Activated T-helper 1 cell treated with anti-CD3 and anti-CD28 coated beads, Interleukin-12 subunit alpha, Interleukin-12 subunit beta, Interleukin-2, Interleukin-4 antibody, amounts not matched to agents 30 ng/mL and 10 ng/mL and 1 ng/mL, durations not matched to agents 14 hours and 24 hours and 36 hours (primary cell): ENCODE measurements at regions of chr1 and their contacts with region 1.

Region 1: GRCh38 chr1:167599957-167600581 is 30.0 kb upstream of the RCSD1 start:
- DNase-seq: peak; percentile 38
- H3K4me3 Mint-ChIP-seq: peak overlapping the region; percentile 73
- H3K27ac Mint-ChIP-seq: peak overlapping the region; percentile 81
- H3K4me1 Mint-ChIP-seq: peaks cover 46% of the 10 kb centered on the region
- H3K27me3 Mint-ChIP-seq: peaks cover 2% of the 10 kb centered on the region

Region 2: DNA sequence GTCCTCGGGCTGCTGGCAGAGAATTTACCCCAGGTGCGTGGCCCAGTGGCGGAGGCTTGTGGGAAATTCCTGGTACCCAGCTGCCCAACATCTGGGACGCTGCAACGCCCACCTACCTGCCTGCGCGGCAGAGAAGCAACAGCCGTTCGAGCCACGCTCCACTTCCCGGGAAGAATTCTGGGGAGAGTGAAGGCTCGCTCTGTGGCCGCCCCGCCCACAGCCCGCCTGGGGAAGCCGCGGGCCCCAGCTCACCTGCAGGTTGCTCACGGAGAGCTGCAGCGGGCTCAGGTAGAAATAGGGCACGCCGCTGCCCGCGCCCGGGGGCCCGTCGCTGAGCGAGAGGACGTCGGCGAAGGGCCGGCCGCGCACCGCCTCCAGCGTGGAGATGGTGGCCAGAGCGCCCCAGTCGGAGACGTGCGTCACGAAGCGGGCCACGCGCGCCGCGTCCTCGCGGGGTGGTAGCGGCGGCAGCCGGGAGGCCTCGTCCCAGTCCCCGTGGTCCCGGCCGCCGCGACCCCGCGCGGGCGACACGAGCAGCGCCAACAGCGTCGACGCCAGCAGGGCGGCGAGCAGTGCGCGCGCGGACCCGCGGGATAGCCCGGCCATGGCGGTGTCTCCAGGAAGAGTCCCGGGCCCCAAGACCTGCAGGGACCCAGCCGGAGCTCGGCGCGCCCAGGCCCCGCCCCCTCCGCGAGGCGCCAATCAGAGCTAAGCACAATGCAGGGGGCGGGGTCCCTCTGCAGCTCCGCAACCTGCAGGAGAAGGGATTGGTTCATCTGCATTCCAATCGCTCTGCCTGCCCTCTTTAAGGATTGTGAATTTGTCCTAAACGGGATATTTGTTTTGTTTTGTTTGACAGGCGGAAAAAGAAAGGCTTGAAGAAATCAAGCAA is 46.7 kb before region 1 on chr1 and contains the start of gene CREG1:
- intact Hi-C with region 1: loop called (anchors 2 kb)
- DNase-seq: peak; percentile 89
- H3K4me3 Mint-ChIP-seq: peak within 1 kb of the TSS; percentile 86
- H3K27ac Mint-ChIP-seq: peak within 1 kb of the TSS; percentile 4
- H3K4me1 Mint-ChIP-seq: peaks cover 40% of the 10 kb centered on the region
- H3K27me3 Mint-ChIP-seq: peaks cover 1% of the 10 kb centered on the region
- total RNA-seq, gene CREG1: 15.3 and 16.8 TPM in 2 replicates

Region 3: GRCh38 chr1:167617153-167618147 is 17.4 kb after region 1 on chr1:
- intact Hi-C with region 1: loop called (anchors 2 kb)
- DNase-seq: no peak
- H3K4me3 Mint-ChIP-seq: peak overlapping the region; percentile 81
- H3K27ac Mint-ChIP-seq: peak overlapping the region; percentile 95
- H3K4me1 Mint-ChIP-seq: peaks cover 65% of the 10 kb centered on the region
- H3K27me3 Mint-ChIP-seq: no peaks in the 10 kb centered on the region

Region 4: DNA sequence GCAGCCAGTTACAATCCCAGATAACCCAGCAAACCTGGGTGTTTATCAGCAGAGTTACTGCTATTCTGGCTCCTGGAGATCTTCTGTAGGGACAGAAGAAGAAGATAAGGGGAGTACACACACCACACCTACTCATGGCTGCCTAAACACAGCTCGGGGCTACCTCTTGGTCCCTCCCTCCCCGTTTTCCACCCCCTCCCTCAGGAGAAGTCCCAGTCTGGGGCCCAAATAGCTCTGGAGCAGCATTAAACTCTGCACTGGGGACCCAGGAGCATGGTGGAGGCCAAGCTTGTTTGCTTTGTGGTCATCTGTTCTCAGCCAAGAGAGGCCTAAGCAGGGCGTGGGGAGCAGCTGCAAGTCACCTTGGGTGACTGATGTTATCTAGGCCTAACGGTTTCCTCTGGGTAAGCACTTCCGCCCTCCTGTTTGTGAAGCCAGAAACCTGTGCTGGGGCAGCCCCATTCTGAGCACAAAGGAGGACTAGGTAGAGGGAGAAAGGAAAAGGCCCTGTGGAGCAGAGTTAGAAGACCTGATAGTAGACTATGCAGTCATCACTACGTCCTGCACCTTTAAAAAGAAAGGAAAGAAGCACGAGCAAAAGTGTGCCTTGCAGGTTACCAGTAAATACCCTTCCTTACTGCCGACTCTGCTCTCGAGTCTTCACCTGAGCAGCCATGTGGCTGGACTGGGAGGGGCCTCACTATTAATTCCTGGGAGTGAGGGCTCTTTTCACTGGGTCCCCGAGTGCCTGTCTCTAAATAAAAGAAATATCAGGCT is 28.0 kb after region 1 on chr1:
- intact Hi-C with region 1: loop called (anchors 1 kb)
- DNase-seq: peak; percentile 82
- H3K4me3 Mint-ChIP-seq: peak overlapping the region; percentile 85
- H3K27ac Mint-ChIP-seq: peak overlapping the region; percentile 89
- H3K4me1 Mint-ChIP-seq: peaks cover 70% of the 10 kb centered on the region
- H3K27me3 Mint-ChIP-seq: no peaks in the 10 kb centered on the region

Region 5: DNA sequence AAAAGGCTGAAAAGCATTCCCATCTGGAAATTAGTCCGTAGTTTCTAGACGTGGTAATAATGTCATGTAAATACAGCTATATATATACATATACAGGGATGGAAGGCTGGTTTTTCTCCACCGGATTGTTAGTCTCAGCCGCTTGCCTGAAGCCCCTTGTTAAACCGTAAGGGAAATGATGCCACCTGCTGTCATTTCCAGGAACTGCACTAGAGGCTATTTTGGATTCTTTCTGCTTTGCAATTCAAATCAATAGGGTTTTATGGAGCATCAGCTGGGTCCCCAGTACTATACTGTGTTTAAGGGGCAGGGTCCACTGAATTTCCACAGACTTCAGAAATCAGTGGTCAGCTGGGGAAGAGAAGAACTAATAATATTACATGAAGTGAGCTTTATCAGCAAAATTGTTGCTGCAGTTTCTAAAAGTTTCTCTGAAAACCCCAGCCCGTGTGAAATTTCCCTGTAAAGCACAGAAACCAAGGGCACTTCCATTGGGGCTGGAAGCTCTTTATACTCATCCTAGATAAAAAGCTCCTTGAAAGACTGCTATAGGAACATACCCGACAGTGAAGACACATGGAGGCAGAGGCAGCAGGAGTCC is 88.0 kb after region 1 on chr1:
- intact Hi-C with region 1: loop called (anchors 1 kb)
- DNase-seq: peak; percentile 61
- H3K4me3 Mint-ChIP-seq: no peak overlapping the region
- H3K27ac Mint-ChIP-seq: peak overlapping the region; percentile 44
- H3K4me1 Mint-ChIP-seq: peaks cover 39% of the 10 kb centered on the region
- H3K27me3 Mint-ChIP-seq: no peaks in the 10 kb centered on the region

Region 6: GRCh38 chr1:167715157-167715999 is 115.3 kb after region 1 on chr1:
- intact Hi-C with region 1: loop called (anchors 1 kb)
- DNase-seq: peak; percentile 84
- H3K4me3 Mint-ChIP-seq: peak overlapping the region; percentile 96
- H3K27ac Mint-ChIP-seq: peak overlapping the region; percentile 91
- H3K4me1 Mint-ChIP-seq: peaks cover 61% of the 10 kb centered on the region
- H3K27me3 Mint-ChIP-seq: peaks cover 21% of the 10 kb centered on the region